ENCODE measurements at regions of chr17 and their contacts with region 1.

Region 1: GRCh38 chr17:78112518-78113226 is 15.9 kb downstream of the TMC6 start:
- DNase-seq: peak; percentile 98
- H3K4me3 ChIP-seq: no peak overlapping the region
- H3K27ac ChIP-seq: no peak overlapping the region
- H3K4me1 ChIP-seq: peaks cover 0 to 14% of the 10 kb centered on the region in 2 experiments; a peak in 1 of 4 replicates
- H3K27me3 ChIP-seq: 0 out of 2 replicates have a peak, but pooled peaks cover 6% of the 10 kb centered on the region
- CTCF ChIP-seq: peak; percentile 100
- EP300 ChIP-seq: no peak
- RAD21 ChIP-seq: peak; percentile 96

Region 2: GRCh38 chr17:78089576-78090281 is 22.9 kb before region 1 on chr17:
- CTCF ChIA-PET with region 1: interaction called, 21 read pairs
- POLR2A ChIA-PET with region 1: no interaction called
- DNase-seq: no peak
- H3K4me3 ChIP-seq: no peak overlapping the region
- H3K27ac ChIP-seq: no peak overlapping the region
- H3K4me1 ChIP-seq: peaks cover 0 to 3% of the 10 kb centered on the region in 2 experiments; a peak in 1 of 4 replicates
- H3K27me3 ChIP-seq: no peaks in the 10 kb centered on the region
- CTCF ChIP-seq: no peak
- EP300 ChIP-seq: no peak
- RAD21 ChIP-seq: no peak

Region 3: GRCh38 chr17:78101112-78101511 is 11.6 kb before region 1 on chr17:
- CTCF ChIA-PET with region 1: interaction called, 40 read pairs
- POLR2A ChIA-PET with region 1: no interaction called
- DNase-seq: no peak
- H3K4me3 ChIP-seq: no peak overlapping the region
- H3K27ac ChIP-seq: no peak overlapping the region
- H3K4me1 ChIP-seq: no peaks in the 10 kb centered on the region
- H3K27me3 ChIP-seq: no peaks in the 10 kb centered on the region
- CTCF ChIP-seq: no peak
- EP300 ChIP-seq: no peak
- RAD21 ChIP-seq: no peak

Region 4: DNA sequence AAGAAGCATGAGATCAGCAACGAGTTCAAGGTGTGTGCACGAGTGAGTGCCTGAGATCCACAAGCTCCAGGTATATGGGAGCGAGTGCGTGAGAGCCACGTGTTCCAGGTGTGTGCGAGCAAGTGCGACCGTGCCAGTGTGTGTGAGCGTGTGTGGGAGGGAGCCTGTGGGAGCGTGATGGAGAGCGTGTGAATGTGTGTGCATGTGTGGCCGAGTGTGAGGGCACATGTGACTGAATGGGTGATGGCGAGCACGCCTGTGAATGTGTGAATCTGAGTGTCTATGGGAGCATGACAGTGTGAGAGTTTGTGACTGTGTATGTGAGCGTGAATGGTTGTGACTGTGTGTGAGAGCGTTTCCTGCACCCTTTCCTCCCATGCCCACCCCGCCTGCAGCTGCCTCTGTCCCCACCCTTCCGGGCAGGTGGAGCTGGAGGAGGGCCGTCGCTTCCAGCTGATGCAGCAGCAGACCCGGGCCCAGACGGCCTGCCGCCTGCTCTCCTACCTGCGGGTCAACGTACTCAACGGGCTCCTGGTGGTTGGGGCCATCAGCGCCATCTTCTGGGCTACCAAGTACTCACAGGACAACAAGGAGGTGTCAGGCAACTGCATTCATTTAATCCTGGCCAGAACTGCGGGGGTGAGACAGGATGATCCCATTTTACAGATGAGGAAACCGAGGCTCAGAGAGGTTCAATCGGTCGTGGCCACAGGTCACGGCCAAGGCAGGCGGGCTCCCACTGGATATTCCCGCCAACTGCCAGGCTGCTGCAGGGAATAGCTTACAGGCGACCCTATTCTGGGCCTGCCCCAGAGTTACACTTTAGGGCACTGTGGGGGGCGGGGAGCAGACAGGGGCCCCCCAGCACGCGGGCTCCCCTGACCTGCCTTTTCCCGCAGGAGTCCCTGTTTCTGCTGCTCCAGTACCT is 21.6 kb after region 1 on chr17:
- CTCF ChIA-PET with region 1: interaction called, 100 read pairs
- POLR2A ChIA-PET with region 1: no interaction called
- DNase-seq: peak; percentile 84
- H3K4me3 ChIP-seq: no peak overlapping the region
- H3K27ac ChIP-seq: no peak overlapping the region
- H3K4me1 ChIP-seq: no peaks in the 10 kb centered on the region; a peak in 1 of 4 replicates
- H3K27me3 ChIP-seq: peaks cover 3% of the 10 kb centered on the region
- CTCF ChIP-seq: peak; percentile 66
- EP300 ChIP-seq: no peak
- RAD21 ChIP-seq: peak; percentile 63

Region 5: GRCh38 chr17:78186692-78187595 is 74.3 kb after region 1 on chr17 and contains the starts of genes AFMID and TK1:
- CTCF ChIA-PET with region 1: interaction called, 30 read pairs
- POLR2A ChIA-PET with region 1: no interaction called
- DNase-seq: peak; percentile 100
- H3K4me3 ChIP-seq: peak within 1 kb of the TSS; percentile 54 to 78
- H3K27ac ChIP-seq: peak within 1 kb of the TSS; percentile 26 to 48; a peak in 2 of 4 replicates
- H3K4me1 ChIP-seq: peaks cover 7% of the 10 kb centered on the region in 2 experiments; a peak in 2 of 4 replicates
- H3K27me3 ChIP-seq: no peaks in the 10 kb centered on the region
- CTCF ChIP-seq: peak; percentile 85
- EP300 ChIP-seq: no peak
- RAD21 ChIP-seq: peak; percentile 35
- polyA plus RNA-seq, gene AFMID: 44.4 and 59.0 TPM in 2 replicates
- polyA plus RNA-seq, gene TK1: 70.7 and 112 TPM in 2 replicates

Region 6: GRCh38 chr17:78300962-78301822 is 188.5 kb after region 1 on chr17:
- CTCF ChIA-PET with region 1: no interaction called
- POLR2A ChIA-PET with region 1: no interaction called
- DNase-seq: no peak
- H3K4me3 ChIP-seq: no peak overlapping the region
- H3K27ac ChIP-seq: no peak overlapping the region
- H3K4me1 ChIP-seq: peaks cover 0 to 5% of the 10 kb centered on the region in 2 experiments; a peak in 1 of 4 replicates
- H3K27me3 ChIP-seq: no peaks in the 10 kb centered on the region
- CTCF ChIP-seq: no peak
- EP300 ChIP-seq: no peak
- RAD21 ChIP-seq: no peak

Measured in SK-N-SH (cell line).